Sciatic nerve (tissue), 2 donors: ENCODE measurements at regions of chr2 and their contacts with region 1.

Region 1: DNA sequence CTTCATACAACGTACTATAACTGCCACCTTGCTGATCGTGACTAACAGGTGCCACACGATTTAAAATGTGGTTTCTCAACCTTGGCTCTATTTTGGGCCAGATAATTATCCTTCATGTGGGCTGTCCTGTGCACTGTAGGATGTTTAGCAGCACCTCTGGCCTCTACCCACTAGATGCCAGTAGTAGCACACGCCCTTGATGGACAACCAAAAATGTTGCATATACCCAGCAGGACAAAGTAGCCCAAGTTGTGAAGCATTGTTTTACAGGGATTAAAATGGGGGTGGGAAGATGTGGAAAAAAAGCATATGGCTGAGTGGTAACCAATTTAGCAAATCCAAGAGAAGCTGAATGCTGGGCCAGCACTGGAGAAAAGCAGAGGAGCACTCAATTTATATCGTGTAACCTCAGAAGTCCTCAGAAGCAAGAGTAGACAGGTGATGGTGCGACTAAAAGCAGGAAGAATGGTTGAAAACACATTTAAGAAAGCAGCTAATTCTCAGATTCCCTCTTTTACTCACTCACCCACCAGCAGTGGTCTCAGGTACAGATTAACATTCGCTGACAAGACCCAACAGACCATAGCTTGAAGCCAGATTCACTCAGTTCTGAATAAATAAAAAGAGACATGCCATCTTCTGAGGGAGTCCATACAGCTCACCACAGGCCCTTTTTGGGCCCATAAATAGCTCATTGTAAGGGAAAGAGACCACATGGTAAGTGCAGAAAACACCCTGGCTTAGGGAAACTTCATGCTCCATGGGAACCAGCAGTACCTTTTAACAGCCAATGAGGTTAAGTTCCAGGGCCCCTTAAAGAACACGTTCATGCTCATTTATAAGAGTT is 50.6 kb downstream of the RAPH1 start:
- DNase-seq: no peak
- ATAC-seq: peak; percentile 87

Region 2: GRCh38 chr2:203814661-203815540 is 330.4 kb after region 1 on chr2:
- intact Hi-C with region 1: loop called (anchors 10 kb)
- DNase-seq: no peak
- ATAC-seq: peak; percentile 92